AG04449 (cell line): ENCODE measurements at regions of chr2 and their contacts with region 1.

Region 1: GRCh38 chr2:9770308-9771100 is 72.8 kb upstream of the TAF1B start:
- DNase-seq: peak; percentile 10
- H3K4me3 ChIP-seq: no peak overlapping the region
- CTCF ChIP-seq: peak; percentile 76

Region 2: DNA sequence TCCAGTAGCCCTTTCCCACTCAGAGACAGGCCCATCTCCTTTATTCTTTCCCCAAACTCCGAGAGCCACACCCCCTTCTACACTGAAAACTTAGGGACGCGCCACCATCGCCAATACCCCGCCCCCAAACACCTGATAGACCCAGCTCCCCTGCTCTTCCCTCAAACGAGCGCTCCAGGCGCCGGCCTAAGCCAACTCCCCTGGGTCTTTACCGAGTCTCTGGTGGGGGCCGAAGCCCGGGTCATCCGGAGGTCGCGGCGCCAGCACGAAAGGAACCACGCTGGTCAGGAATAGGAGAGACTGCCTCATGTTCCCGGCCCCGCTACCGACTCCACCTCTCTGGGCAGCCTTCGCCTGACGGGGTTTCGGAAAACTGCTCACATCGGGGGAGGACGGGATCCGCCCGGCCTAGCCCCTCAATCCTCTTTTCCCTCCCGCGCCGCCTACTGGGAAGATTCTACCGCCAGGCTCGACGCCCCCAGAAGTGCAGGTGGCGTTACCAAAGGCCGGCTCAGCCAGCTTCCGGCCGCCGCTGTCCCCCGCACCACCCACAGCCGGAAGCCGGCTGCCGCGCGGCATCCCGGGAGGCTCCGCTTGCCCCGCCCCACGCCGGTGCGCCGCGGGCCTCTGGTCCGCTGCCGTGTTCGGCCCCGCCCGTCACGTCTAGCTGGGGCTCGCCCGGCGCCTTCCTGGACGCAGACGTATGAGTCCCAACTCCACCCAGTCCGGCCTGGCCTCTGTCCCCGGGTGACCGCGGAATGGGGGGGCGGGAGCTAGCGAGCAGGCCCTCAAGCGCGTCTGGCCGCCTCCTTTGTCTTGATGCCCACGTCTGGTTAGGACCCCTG is 215.0 kb before region 1 on chr2 and contains the start of gene ADAM17:
- CTCF ChIA-PET with region 1: interaction called, 11 read pairs
- POLR2A ChIA-PET with region 1: no interaction called
- DNase-seq: peak; percentile 76
- H3K4me3 ChIP-seq: peak within 1 kb of the TSS; percentile 95
- CTCF ChIP-seq: peak; percentile 79

Region 3: GRCh38 chr2:9630749-9631483 is 139.6 kb before region 1 on chr2 and contains the start of gene YWHAQ:
- CTCF ChIA-PET with region 1: interaction called, 15 read pairs
- POLR2A ChIA-PET with region 1: interaction called, 3 read pairs
- DNase-seq: peak; percentile 89
- H3K4me3 ChIP-seq: peak within 1 kb of the TSS; percentile 98
- CTCF ChIP-seq: no peak

Region 4: GRCh38 chr2:9745153-9745899 is 25.2 kb before region 1 on chr2:
- CTCF ChIA-PET with region 1: interaction called, 27 read pairs
- POLR2A ChIA-PET with region 1: no interaction called
- DNase-seq: no peak
- H3K4me3 ChIP-seq: no peak overlapping the region
- CTCF ChIP-seq: no peak

Region 5: DNA sequence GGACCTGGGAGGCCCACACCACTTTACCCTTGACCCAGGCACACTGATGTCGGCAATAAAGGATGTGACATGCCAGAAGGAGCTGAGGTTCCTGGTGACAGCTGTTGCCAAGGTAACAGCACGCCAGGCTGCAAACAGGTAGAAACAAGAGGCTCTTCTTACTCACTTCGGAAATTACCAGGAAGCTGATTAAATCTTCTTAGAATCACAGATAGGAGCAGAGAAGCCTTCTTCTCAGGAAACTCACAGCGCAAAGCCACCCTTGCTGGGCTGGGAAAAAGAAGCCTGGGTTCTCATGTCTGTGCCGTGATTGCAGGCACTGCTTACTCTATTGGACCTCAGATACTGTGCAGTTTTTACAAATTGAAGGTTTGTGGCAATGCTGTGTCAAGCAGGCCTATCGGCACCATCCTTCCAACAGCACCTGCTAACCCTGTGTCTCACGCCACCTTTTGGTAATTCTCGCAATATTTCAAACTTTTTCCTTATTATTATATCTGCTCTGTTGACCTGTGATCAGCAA is 11.8 kb after region 1 on chr2:
- CTCF ChIA-PET with region 1: interaction called, 47 read pairs
- POLR2A ChIA-PET with region 1: no interaction called
- DNase-seq: no peak
- H3K4me3 ChIP-seq: no peak overlapping the region
- CTCF ChIP-seq: no peak

Region 6: GRCh38 chr2:9799665-9800632 is 29.4 kb after region 1 on chr2:
- CTCF ChIA-PET with region 1: interaction called, 121 read pairs
- POLR2A ChIA-PET with region 1: no interaction called
- DNase-seq: no peak
- H3K4me3 ChIP-seq: no peak overlapping the region
- CTCF ChIP-seq: peak; percentile 100

Region 7: GRCh38 chr2:10057231-10058107 is 287.0 kb after region 1 on chr2:
- CTCF ChIA-PET with region 1: interaction called, 13 read pairs
- POLR2A ChIA-PET with region 1: no interaction called
- DNase-seq: no peak
- H3K4me3 ChIP-seq: peak overlapping the region; percentile 34
- CTCF ChIP-seq: no peak